AG04450 (cell line): ENCODE measurements at regions of chr18 and their contacts with region 1.

Region 1: DNA sequence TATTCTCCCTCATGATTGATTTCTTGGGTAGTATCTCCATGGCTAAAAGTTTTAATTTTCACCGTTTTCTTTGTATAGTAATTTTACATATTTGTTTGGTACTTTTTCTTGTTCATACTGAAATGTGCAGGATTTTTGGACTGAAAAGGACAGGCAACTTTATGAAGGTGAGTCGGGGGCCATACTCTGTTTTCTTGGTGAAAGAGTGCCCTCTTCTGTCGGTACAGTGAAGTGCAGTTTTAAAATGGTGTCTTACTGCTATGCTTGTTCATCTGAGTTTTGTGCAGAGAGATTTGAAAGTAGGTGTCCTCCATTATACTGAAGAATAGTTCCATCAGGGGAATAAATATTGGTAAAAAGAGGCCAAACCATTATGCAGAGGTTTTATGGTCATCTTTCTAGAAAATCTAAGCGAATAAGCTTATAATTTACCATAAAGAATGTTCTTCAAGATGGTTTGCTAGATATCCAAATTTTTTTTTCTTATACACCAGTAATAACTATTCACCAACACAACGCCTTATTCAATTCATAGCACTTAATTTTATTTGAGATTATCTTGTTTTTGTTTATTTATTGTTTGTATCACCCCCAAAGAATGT is 8.7 kb upstream of the SERPINB13 start:
- DNase-seq: no peak
- H3K4me3 ChIP-seq: no peak overlapping the region
- H3K27ac ChIP-seq: no peak overlapping the region
- H3K27me3 ChIP-seq: no peaks in the 10 kb centered on the region
- CTCF ChIP-seq: peak; percentile 68

Region 2: GRCh38 chr18:62372156-62372555 is 1206.3 kb before region 1 on chr18:
- CTCF ChIA-PET with region 1: no interaction called
- POLR2A ChIA-PET with region 1: no interaction called
- DNase-seq: no peak
- H3K4me3 ChIP-seq: no peak overlapping the region
- H3K27ac ChIP-seq: no peak overlapping the region
- H3K27me3 ChIP-seq: peaks cover 16% of the 10 kb centered on the region
- CTCF ChIP-seq: no peak

Region 3: DNA sequence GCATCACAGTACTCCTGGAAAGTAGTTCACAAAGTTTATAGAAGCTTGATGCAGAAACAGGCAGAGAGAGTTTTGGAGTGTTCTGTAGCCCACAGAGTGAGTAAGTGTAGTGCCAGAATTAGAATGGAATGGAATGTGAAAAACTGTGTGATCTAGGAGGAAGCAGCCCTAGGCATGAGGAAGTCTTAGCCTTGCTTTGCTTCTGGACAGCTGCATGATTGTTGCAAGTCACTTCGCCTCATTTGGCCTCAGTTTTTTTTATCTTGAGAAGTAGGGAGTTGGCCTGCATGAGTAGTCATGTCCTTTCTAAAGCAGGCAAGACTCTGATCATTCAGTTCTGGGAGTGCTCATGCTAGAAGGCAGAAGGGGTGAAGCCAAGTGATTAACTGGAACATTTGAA is 25.3 kb before region 1 on chr18:
- CTCF ChIA-PET with region 1: interaction called, 19 read pairs
- POLR2A ChIA-PET with region 1: no interaction called
- DNase-seq: peak; percentile 48
- H3K4me3 ChIP-seq: no peak overlapping the region
- H3K27ac ChIP-seq: no peak overlapping the region
- H3K27me3 ChIP-seq: peaks cover 5% of the 10 kb centered on the region
- CTCF ChIP-seq: no peak

Region 4: DNA sequence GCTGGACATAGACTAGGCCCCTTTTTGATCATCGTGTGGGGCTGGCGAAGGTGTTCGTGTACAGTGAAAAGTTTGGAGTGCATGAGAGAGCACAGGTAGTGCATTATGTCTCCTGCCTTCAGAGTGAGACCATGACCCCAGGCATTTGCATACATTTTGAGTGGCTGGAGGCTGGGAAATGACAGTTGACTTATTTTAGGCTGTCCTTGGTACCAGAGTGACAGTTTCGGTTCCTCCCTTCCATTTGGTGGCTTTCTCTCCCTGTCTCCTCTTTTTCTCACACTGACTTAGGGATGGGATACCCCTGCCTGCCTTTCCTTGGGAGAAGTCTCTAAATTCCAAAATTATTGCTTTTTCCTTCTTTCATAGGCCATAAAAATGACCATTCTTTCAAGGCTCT is 16.2 kb before region 1 on chr18:
- CTCF ChIA-PET with region 1: interaction called, 57 read pairs
- POLR2A ChIA-PET with region 1: no interaction called
- DNase-seq: no peak
- H3K4me3 ChIP-seq: no peak overlapping the region
- H3K27ac ChIP-seq: no peak overlapping the region
- H3K27me3 ChIP-seq: no peaks in the 10 kb centered on the region
- CTCF ChIP-seq: no peak

Region 5: DNA sequence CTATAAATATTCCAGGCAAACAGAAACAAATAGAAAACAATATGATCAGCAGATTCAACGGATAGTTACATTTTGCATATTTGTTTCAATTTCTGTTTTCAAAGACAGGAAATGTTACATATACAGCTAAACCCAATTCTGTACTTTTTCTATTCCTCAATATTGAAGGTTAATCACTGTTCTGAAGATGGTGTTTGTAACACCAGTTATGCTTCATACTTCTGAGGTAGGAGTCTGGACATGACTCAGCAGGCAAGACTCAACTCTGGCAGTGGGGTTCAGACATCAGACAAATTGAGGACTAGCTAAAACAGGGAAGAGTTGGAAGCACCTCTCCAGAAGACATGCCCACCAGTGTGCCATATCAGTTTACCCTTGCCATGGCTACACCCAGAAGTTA is 25.3 kb after region 1 on chr18:
- CTCF ChIA-PET with region 1: interaction called, 17 read pairs
- POLR2A ChIA-PET with region 1: no interaction called
- DNase-seq: no peak
- H3K4me3 ChIP-seq: no peak overlapping the region
- H3K27ac ChIP-seq: no peak overlapping the region
- H3K27me3 ChIP-seq: no peaks in the 10 kb centered on the region
- CTCF ChIP-seq: no peak

Region 6: GRCh38 chr18:63741769-63742168 is 163.3 kb after region 1 on chr18:
- CTCF ChIA-PET with region 1: interaction called, 66 read pairs
- POLR2A ChIA-PET with region 1: no interaction called
- DNase-seq: no peak
- H3K4me3 ChIP-seq: no peak overlapping the region
- H3K27ac ChIP-seq: no peak overlapping the region
- H3K27me3 ChIP-seq: no peaks in the 10 kb centered on the region
- CTCF ChIP-seq: peak; percentile 69

Region 7: GRCh38 chr18:63848159-63848558 is 269.7 kb after region 1 on chr18:
- CTCF ChIA-PET with region 1: interaction called, 27 read pairs
- POLR2A ChIA-PET with region 1: no interaction called
- DNase-seq: peak; percentile 37
- H3K4me3 ChIP-seq: no peak overlapping the region
- H3K27ac ChIP-seq: no peak overlapping the region
- H3K27me3 ChIP-seq: no peaks in the 10 kb centered on the region
- CTCF ChIP-seq: peak; percentile 74